ENCODE measurements at regions of chr22 and their contacts with region 1.

Region 1: DNA sequence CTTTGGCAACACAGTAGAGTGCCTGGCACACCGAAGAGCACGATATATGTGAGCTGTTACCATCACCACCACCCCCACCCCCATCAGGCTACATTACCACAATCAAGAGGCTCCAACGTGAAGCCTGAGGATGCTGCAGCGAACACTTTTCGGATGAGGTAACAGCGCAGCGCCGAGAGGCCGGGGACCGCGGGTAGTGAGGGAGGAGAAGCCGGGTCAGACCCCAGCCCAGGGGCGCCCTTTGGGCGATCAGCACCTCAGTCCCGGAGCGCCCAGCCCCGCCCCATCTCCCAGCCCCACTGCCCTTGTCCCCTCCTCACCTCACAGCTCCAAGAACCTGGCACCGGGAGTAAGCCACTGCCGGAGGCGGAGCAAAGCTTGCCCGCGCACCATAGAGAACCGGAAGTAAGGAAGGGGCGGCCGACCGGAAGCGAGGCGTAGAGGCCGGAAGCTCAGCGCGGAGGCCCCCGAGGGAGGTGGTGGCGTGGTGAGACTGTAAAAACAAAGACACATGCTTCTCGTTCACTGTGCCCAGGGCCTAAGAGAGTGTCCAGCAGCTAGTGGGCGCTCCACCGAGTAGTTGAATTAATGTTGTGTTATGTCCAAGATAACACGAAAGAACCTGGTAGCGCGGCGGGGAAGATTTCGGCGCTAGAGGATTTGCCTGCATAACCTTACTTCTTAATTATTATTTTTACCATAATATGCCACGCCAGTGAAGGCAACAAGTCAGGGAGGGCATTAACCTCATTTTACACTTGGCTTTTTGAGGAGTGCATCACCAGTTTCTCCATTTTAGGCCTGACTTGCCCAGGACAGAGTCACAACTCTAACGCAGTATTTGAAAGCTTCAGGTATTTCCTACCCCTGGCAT is at the start of gene THOC5:
- DNase-seq: peak; percentile 74 to 90 (median 88)
- ATAC-seq: peak; percentile 97
- H3K4me3 ChIP-seq: peak within 1 kb of the TSS; percentile 96
- H3K4me3 Mint-ChIP-seq: peak within 1 kb of the TSS; percentile 84 to 99 (median 94)
- H3K27ac ChIP-seq: peak within 1 kb of the TSS; percentile 84
- H3K27ac Mint-ChIP-seq: peak within 1 kb of the TSS; percentile 94 to 99 (median 98)
- H3K4me1 ChIP-seq: peaks cover 4 to 7% of the 10 kb centered on the region in 2 donors
- H3K4me1 Mint-ChIP-seq: peaks cover 12 to 36% (median 29%) of the 10 kb centered on the region in 7 donors
- H3K27me3 ChIP-seq: no peaks in the 10 kb centered on the region
- H3K27me3 Mint-ChIP-seq: no peaks in the 10 kb centered on the region
- total RNA-seq, gene THOC5: 45.7 to 61.9 (median 57.1) TPM

Region 2: GRCh38 chr22:29394931-29395581 is 158.5 kb before region 1 on chr22:
- CTCF ChIA-PET with region 1: no interaction called
- POLR2A ChIA-PET with region 1: no interaction called
- intact Hi-C with region 1: loop called in 1 of 2 experiments (anchors 2 kb)
- DNase-seq: peak; percentile 43 to 70 (median 64)
- ATAC-seq: peak; percentile 98
- H3K4me3 ChIP-seq: no peak overlapping the region
- H3K4me3 Mint-ChIP-seq: peak overlapping the region in 1 of 10 donors; percentile 23
- H3K27ac ChIP-seq: no peak overlapping the region
- H3K27ac Mint-ChIP-seq: peak overlapping the region in 2 of 9 donors; percentile 38 to 52
- H3K4me1 ChIP-seq: no peaks in the 10 kb centered on the region
- H3K4me1 Mint-ChIP-seq: peaks cover 7 to 19% (median 8%) of the 10 kb centered on the region in 7 donors
- H3K27me3 ChIP-seq: no peaks in the 10 kb centered on the region
- H3K27me3 Mint-ChIP-seq: no peaks in the 10 kb centered on the region

Region 3: DNA sequence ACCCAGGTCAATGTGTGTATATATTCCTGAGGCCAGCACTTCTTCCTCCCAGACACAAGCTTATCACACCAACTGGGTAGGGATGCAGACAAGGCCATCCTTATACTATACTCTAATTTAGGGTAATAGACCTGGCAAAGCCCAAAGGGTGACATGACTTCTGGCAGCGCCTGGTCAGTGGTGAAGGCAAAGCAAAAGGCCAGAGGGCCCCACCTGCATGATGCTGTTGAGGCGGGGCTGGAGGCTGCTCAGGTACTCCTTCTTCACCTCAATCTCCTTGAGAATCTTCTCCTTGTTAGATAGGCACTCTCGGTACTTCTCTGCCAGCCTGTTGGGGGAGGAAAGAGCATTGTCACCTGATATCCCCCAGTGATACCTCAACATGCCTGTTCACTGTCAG is 17.2 kb before region 1 on chr22:
- CTCF ChIA-PET with region 1: no interaction called
- POLR2A ChIA-PET with region 1: no interaction called
- intact Hi-C with region 1: no loop called
- DNase-seq: no peak
- ATAC-seq: no peak
- H3K4me3 ChIP-seq: no peak overlapping the region
- H3K4me3 Mint-ChIP-seq: no peak overlapping the region
- H3K27ac ChIP-seq: no peak overlapping the region
- H3K27ac Mint-ChIP-seq: peak overlapping the region in 2 of 9 donors; percentile 38 to 55
- H3K4me1 ChIP-seq: no peaks in the 10 kb centered on the region
- H3K4me1 Mint-ChIP-seq: peaks cover 0 to 10% (median 0%) of the 10 kb centered on the region in 7 donors
- H3K27me3 ChIP-seq: no peaks in the 10 kb centered on the region
- H3K27me3 Mint-ChIP-seq: no peaks in the 10 kb centered on the region

Region 4: DNA sequence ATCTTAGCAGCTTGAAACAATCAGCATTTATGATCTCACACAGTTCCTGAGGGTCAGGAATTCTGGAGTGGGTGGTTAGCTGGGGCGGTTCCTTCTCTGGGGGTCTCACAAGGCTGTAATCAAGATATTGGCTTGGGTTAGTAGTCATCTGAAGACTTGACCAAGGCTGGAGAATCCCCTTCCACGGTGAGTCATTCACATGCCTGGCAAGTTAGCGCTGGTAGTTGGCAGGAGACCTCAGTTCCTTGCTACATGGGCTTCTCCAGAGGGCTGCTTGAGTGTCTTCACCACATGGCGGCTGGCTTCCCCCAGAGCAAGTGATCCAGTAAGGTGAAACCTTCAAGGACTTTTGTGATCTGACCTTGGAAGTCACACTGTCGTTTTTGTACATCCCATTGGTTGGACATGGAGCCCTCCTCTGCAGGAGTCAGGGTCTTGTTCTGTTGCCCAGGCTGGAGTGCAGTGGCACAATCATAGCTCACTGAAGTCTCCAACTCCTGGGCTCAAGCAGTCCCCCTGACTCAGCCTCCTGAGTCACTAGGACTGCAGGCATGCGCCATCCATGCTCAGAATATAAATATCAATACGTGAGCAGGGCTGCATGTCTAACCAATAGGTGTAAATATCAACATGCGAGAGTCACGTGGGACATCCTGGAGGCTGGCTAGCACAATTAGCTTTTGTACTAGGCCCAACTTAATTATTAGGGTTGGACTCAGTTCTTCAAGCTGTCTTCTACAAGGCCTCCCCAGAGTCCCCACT is 34.5 kb after region 1 on chr22:
- CTCF ChIA-PET with region 1: no interaction called
- POLR2A ChIA-PET with region 1: interaction called, 10 read pairs
- intact Hi-C with region 1: no loop called
- DNase-seq: no peak
- ATAC-seq: no peak
- H3K4me3 ChIP-seq: no peak overlapping the region
- H3K4me3 Mint-ChIP-seq: no peak overlapping the region
- H3K27ac ChIP-seq: no peak overlapping the region
- H3K27ac Mint-ChIP-seq: peak overlapping the region in 5 of 9 donors; percentile 25 to 86 (median 71)
- H3K4me1 ChIP-seq: peaks cover 6 to 8% of the 10 kb centered on the region in 2 donors
- H3K4me1 Mint-ChIP-seq: peaks cover 4 to 11% (median 10%) of the 10 kb centered on the region in 7 donors
- H3K27me3 ChIP-seq: no peaks in the 10 kb centered on the region
- H3K27me3 Mint-ChIP-seq: no peaks in the 10 kb centered on the region

Region 5: DNA sequence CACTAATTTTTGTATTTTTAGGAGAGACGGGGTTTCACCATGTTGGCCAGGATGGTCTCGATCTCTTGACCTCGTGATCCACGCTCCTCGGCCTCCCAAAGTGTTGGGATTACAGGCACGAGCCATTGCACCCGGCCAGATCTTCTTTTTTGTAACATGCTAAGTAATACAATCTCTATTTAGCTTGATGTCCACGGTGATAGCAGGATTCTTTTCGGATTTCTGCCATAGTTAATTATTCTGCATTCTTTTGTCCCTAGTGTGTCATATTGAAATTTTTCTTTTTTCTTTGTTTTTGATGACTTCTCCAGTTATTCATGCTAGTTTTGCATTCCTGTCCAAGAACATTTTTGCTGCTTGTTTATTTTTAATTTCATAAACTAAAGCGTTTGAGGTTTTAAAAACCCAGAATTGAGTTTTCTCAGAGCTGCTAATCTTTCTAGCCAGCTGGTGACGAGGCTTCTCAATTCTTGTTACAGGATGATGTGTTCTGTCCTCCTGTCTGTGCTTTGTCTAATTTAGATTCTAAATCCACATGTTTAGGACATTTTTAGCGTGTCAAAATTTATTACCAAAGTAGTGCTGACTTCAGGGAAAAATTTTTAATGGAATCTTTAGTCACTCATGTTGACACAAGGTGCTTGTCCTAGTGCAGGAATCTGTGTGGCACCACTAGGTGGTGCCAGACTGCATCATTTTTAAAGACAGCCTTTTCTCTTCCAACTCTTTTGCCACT is 71.7 kb after region 1 on chr22:
- CTCF ChIA-PET with region 1: interaction called, 3 read pairs
- POLR2A ChIA-PET with region 1: interaction called, 11 read pairs
- intact Hi-C with region 1: no loop called
- DNase-seq: peak in 7 of 9 donors; percentile 15 to 49 (median 40)
- ATAC-seq: peak; percentile 74
- H3K4me3 ChIP-seq: no peak overlapping the region
- H3K4me3 Mint-ChIP-seq: peak overlapping the region in 7 of 10 donors; percentile 2 to 64 (median 25)
- H3K27ac ChIP-seq: peak overlapping the region; percentile 73
- H3K27ac Mint-ChIP-seq: peak overlapping the region; percentile 63 to 89 (median 85)
- H3K4me1 ChIP-seq: peaks cover 0 to 39% of the 10 kb centered on the region in 2 donors
- H3K4me1 Mint-ChIP-seq: peaks cover 41 to 92% (median 85%) of the 10 kb centered on the region in 7 donors
- H3K27me3 ChIP-seq: no peaks in the 10 kb centered on the region
- H3K27me3 Mint-ChIP-seq: no peaks in the 10 kb centered on the region

Measured in naive thymus-derived CD4-positive, alpha-beta T cell (primary cell).